ENCODE measurements at regions of chr6 and their contacts with region 1.

Region 1: GRCh38 chr6:8131256-8131897 is 29.0 kb upstream of the EEF1E1 start:
- DNase-seq: peak in 5 of 10 donors; percentile 8 to 49 (median 35)

Region 2: DNA sequence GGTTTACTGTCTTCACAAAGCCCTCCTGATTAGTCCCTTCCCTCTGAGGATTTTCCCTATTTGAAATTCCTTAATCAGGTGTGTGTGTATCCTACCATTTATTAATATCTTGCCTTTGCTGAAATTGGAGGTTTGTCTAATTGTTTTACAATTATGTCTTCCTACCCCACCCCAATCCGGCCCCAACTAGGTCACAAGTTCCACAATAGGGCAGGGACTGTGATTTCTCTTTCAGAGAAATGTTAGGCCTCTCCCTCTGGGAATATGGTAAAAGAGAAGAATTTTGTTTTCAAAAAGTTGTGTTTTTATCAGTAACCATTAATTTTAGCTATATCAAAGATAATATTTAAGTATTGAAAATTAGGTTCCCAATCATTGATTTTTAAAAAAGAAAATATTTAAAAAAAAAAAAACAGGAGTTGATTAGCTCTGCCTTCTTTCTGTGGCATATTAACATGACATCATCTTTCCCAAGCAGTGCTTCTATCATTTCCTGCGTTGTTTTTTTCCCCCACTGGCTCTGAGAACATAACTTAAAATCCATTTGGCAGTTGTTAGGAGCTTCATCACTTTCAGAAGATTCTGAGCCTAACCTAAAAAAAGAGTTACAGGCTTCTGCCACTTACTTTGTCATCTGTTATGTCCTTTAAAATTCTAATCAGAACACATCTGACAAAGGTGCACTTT is 103.3 kb before region 1 on chr6:
- intact Hi-C with region 1: no loop called
- DNase-seq: no peak

Region 3: GRCh38 chr6:8219352-8219943 is 88.1 kb after region 1 on chr6:
- intact Hi-C with region 1: loop called (anchors 1 kb)
- DNase-seq: peak in 3 of 10 donors; percentile 21 to 30 (median 29)